ENCODE measurements at regions of chr11 and their contacts with region 1.

Region 1: DNA sequence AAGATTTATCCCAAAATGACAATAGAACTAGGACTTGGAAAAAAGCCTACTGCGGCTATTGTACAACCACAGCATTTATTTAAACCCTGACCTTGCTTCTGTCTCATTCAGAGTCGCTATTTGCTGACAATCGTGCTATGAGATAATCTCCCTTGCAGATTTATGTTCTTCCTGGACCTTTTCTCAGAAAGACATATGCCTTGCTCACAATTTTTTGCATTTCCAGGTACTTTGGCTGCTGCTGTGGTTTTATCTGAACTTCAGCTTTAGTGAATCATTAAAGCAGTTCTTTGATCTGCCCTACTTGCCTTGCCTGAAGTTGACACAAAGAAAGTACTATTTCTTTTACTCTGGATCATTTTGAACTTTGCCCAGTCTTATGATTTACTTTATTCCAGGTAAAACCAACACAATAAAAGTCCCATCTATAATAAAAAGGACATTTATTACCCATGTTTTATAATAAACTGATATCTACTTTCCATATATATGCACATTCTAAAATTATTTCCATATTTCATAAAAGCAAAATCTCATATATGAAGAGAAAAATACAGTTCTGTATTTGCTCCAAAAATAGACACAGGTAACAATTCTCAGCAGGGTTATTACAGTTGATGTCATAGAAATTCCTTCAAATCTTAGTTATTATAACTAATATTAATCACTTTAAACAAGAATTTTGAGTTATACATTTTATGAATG is 63.4 kb upstream of the CARD18 start:
- DNase-seq: peak; percentile 70
- ATAC-seq: peak; percentile 74
- H3K4me3 ChIP-seq: no peak overlapping the region
- H3K27ac ChIP-seq: peak overlapping the region; percentile 1; the same call in 1 of the 2 replicates
- H3K4me1 ChIP-seq: peaks cover 40% of the 10 kb centered on the region
- H3K27me3 ChIP-seq: no peaks in the 10 kb centered on the region
- CTCF ChIP-seq: no peak

Region 2: DNA sequence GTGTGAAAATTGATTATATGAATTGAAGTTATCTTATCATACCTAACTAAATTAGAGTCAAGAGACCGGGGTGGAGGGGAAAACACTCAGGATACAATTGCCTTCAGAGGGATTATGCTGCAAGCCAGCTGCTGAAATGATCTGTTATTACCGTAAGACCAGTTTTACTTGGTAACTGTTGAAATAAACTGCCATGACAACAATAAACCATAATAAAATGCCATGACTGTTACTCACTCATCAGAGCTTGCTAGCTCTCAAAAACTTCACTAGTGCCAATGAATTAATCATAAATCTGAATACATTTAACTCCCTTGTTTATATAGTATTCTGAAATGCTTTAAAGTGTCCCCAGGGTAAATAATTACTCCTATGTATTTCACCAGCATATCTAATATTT is 372.9 kb before region 1 on chr11:
- CTCF ChIA-PET with region 1: no interaction called
- POLR2A ChIA-PET with region 1: no interaction called
- intact Hi-C with region 1: loop called (anchors 1 kb)
- DNase-seq: peak; percentile 85
- ATAC-seq: peak; percentile 96
- H3K4me3 ChIP-seq: no peak overlapping the region
- H3K27ac ChIP-seq: no peak overlapping the region
- H3K4me1 ChIP-seq: peaks cover 9% of the 10 kb centered on the region
- H3K27me3 ChIP-seq: no peaks in the 10 kb centered on the region
- CTCF ChIP-seq: no peak

Region 3: DNA sequence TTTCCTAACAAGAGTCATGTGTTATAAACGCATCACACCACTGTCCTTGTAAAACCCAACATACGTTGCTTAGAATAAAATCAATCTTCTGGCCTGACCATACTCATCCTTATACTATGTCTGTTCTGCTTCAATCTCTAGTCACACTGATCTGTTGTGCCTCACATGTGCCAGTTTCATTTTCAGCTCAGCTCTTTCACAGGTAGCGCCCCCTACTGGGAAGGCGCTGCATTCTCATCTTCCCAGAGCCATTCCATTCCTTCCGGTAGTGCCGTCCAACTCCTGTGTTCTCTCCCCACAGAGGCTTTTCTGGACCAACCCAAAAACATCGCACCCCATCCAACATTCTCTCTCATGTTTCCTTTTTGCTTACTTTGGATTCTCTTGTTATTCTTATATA is 202.2 kb before region 1 on chr11:
- CTCF ChIA-PET with region 1: no interaction called
- POLR2A ChIA-PET with region 1: no interaction called
- intact Hi-C with region 1: loop called (anchors 5 kb)
- DNase-seq: no peak
- ATAC-seq: no peak
- H3K4me3 ChIP-seq: no peak overlapping the region
- H3K27ac ChIP-seq: no peak overlapping the region
- H3K4me1 ChIP-seq: no peaks in the 10 kb centered on the region
- H3K27me3 ChIP-seq: no peaks in the 10 kb centered on the region
- CTCF ChIP-seq: peak; percentile 82

Region 4: DNA sequence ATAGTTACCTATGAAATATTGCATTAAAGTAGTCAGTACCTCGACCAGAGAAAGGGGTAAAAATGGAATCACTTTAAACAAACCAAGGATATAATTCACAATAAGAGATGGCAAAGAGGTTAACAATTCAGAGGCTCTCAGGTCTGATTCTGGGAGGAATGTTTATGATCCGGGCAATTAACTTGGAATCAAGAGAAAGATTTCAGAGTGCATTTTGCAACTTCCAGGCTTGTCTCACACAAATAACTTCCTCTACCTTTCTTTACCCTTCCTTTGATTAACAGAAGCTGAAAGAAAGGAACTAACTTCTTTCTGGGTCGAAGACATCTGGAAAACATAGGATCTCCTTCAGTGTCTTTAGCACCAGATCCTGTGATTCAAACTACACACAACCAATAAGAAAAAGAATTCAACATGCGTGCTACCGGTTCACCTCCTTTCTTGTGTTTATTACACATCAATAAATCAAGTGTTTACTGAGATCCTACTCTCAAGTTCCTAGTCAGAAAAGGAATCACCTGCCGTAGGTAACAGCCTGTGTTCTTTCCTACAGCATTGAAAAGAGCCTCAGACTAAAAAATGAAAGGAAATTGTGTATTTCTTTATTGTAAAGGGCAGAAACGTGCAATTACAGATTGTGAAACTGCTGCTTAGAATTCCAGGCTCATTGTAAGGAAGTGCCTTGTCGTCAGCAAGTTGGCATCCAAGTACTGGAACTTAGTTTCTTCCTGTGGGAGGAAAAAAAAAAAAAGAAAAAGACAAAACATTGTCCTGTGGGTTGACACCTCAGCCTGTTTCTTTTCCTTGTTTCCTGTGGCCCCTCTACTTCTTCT is 92.9 kb before region 1 on chr11:
- CTCF ChIA-PET with region 1: no interaction called
- POLR2A ChIA-PET with region 1: no interaction called
- intact Hi-C with region 1: no loop called
- DNase-seq: peak; percentile 29
- ATAC-seq: peak; percentile 7; the same call in 1 of the 2 replicates
- H3K4me3 ChIP-seq: peak overlapping the region; percentile 13; the same call in 1 of the 2 replicates
- H3K27ac ChIP-seq: peak overlapping the region; percentile 69
- H3K4me1 ChIP-seq: peaks cover 40% of the 10 kb centered on the region
- H3K27me3 ChIP-seq: no peaks in the 10 kb centered on the region
- CTCF ChIP-seq: no peak

Region 5: GRCh38 chr11:105151936-105152554 is 51.0 kb before region 1 on chr11:
- CTCF ChIA-PET with region 1: no interaction called
- POLR2A ChIA-PET with region 1: no interaction called
- intact Hi-C with region 1: loop called (anchors 2 kb)
- DNase-seq: peak; percentile 88
- ATAC-seq: peak; percentile 95
- H3K4me3 ChIP-seq: peak overlapping the region; percentile 41
- H3K27ac ChIP-seq: peak overlapping the region; percentile 88
- H3K4me1 ChIP-seq: peaks cover 22% of the 10 kb centered on the region
- H3K27me3 ChIP-seq: no peaks in the 10 kb centered on the region
- CTCF ChIP-seq: no peak

Region 6: GRCh38 chr11:105589346-105589745 is 386.4 kb after region 1 on chr11:
- CTCF ChIA-PET with region 1: no interaction called
- POLR2A ChIA-PET with region 1: no interaction called
- intact Hi-C with region 1: loop called (anchors 1 kb)
- DNase-seq: peak; percentile 60
- ATAC-seq: peak; percentile 63
- H3K4me3 ChIP-seq: no peak overlapping the region
- H3K27ac ChIP-seq: no peak overlapping the region
- H3K4me1 ChIP-seq: peaks cover 5% of the 10 kb centered on the region
- H3K27me3 ChIP-seq: no peaks in the 10 kb centered on the region
- CTCF ChIP-seq: no peak

Region 7: GRCh38 chr11:105665281-105665680 is 462.3 kb after region 1 on chr11:
- CTCF ChIA-PET with region 1: no interaction called
- POLR2A ChIA-PET with region 1: no interaction called
- intact Hi-C with region 1: no loop called
- DNase-seq: no peak
- ATAC-seq: no peak
- H3K4me3 ChIP-seq: no peak overlapping the region
- H3K27ac ChIP-seq: no peak overlapping the region
- H3K4me1 ChIP-seq: no peaks in the 10 kb centered on the region
- H3K27me3 ChIP-seq: peaks cover under 1% of the 10 kb centered on the region; the same call in 1 of the 2 replicates
- CTCF ChIP-seq: no peak

Region 8: DNA sequence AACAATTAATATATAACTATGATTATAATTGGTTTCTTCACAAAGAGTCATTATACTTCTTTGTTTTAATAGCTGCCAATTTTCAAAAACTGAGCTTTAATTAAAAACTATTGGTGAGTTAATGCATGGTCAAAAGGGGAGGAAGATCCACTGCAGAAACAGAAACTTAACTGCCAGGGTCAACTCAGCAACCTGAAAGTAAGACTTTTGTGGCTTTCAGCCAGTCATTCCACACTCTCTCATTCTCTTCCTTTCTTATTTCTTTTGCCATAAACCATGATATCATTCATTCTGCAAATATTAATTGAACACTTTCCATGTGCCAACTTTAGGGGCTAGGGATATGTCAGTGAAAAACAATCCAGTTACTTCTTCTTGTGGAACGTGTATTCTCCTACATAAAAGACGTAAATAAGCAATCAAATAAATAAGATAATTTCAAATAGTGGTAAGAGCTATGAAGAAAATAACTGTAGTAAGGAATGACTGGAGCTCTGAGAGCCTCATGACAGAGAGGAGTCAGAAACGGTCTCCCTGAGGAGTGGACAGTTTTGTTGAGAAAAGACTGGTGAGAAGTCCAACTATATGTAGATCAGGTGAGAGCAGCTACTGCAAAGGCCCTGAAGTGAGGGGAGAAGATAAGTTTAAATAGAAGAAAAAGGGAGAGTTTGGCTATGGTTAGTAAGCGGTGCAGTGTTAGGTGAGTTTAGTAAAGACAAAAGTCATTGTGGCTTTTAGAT is 537.3 kb after region 1 on chr11:
- CTCF ChIA-PET with region 1: no interaction called
- POLR2A ChIA-PET with region 1: no interaction called
- intact Hi-C with region 1: loop called (anchors 1 kb)
- DNase-seq: no peak
- ATAC-seq: no peak
- H3K4me3 ChIP-seq: no peak overlapping the region
- H3K27ac ChIP-seq: no peak overlapping the region
- H3K4me1 ChIP-seq: peaks cover 21% of the 10 kb centered on the region
- H3K27me3 ChIP-seq: no peaks in the 10 kb centered on the region
- CTCF ChIP-seq: no peak

Measured in PC-3 (cell line).